Activated CD4-positive, alpha-beta T cell treated with anti-CD3 and anti-CD28 coated beads for 36 hours (primary cell): ENCODE measurements at regions of chr10 and their contacts with region 1.

Region 1: DNA sequence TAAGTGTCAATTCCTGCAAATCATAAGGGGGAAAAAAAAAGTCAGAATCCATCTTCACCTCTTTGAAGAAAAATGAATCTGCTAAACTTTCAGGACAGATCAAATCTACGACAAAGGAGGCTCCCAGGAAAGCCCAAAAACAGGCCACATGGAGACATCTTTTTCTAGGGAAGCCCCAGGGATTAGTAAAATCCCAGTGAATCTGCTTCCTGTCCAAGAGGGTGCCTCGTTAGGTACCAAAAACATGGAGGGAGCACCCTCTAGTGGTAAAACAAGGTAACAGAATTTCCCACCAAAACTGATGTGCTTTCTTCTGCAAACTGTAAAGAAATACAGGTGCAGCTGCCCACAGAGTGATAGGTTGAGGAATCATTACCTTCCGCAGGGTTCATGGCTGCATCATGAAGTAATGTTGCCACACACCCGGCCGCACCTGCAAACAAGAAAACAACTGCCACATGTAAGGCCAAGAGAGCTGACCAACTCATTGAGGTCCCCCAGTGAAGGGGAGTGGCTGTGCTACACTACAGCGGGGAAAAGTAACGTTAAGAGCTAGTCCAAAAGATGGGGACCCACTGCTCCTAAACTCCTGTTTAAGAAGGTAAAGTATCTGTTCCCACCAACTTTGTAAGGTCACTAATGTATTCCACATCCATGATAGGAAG is 7.9 kb downstream of the SLC25A28 start:
- DNase-seq: peak; percentile 28
- ATAC-seq: peak; percentile 31
- H3K4me3 Mint-ChIP-seq: no peak overlapping the region
- H3K27ac Mint-ChIP-seq: peak overlapping the region; percentile 30
- H3K4me1 Mint-ChIP-seq: peaks cover 37% of the 10 kb centered on the region
- H3K27me3 Mint-ChIP-seq: no peaks in the 10 kb centered on the region

Region 2: GRCh38 chr10:99395750-99396445 is 216.4 kb before region 1 on chr10:
- CTCF ChIA-PET with region 1: interaction called, 6 read pairs
- POLR2A ChIA-PET with region 1: no interaction called
- intact Hi-C with region 1: loop called (anchors 1 to 2 kb)
- DNase-seq: no peak
- ATAC-seq: no peak
- H3K4me3 Mint-ChIP-seq: no peak overlapping the region
- H3K27ac Mint-ChIP-seq: no peak overlapping the region
- H3K4me1 Mint-ChIP-seq: peaks cover 8% of the 10 kb centered on the region
- H3K27me3 Mint-ChIP-seq: no peaks in the 10 kb centered on the region

Region 3: GRCh38 chr10:99560277-99561126 is 51.8 kb before region 1 on chr10:
- CTCF ChIA-PET with region 1: interaction called, 37 read pairs
- POLR2A ChIA-PET with region 1: no interaction called
- intact Hi-C with region 1: loop called (anchors 1 kb)
- DNase-seq: peak; percentile 66
- ATAC-seq: no peak
- H3K4me3 Mint-ChIP-seq: no peak overlapping the region
- H3K27ac Mint-ChIP-seq: no peak overlapping the region
- H3K4me1 Mint-ChIP-seq: peaks cover 8% of the 10 kb centered on the region
- H3K27me3 Mint-ChIP-seq: peaks cover 20% of the 10 kb centered on the region

Region 4: DNA sequence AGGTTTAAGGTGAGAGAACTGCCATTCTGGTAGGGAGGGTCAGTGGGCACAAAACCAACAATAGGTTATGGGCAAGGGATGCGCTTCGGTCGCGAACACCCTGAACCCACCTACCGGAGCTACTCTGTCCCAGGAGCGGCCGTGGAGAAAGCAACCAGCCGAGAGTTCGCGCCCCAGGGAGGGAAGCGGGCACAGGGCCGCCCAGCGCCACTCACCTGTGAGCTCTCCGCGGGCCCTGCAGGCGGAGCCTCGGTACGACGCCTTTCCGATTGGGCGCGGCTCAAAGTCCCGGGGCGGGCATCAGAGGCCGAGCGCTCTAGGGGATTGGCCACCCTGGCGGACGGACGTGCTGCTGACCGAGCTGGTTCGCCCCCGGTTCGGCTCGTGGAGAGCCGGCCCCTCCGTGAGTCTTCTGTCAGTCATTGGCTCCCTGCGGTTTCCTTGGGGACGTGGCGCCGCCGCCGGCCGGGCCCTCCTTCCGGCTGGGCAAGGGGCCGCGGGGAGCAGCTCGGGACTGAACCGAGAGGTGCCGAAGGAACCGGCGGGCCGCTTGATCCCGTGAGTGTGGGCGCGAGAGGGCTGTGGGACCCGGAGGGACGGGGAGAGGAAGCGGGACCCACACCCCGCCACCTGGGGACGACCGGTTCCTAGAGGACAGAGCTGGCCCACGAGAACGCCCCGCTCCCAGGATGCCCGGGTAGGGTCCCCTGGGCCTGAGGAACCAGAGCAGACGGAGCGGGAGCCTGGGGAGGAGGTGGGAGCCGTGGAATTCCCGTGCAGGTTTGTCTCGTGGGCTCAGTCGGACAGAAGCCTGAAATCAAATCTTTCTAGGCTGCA is 47.0 kb after region 1 on chr10 and contains the start of gene ENTPD7:
- CTCF ChIA-PET with region 1: interaction called, 10 read pairs
- POLR2A ChIA-PET with region 1: interaction called, 7 read pairs
- intact Hi-C with region 1: no loop called
- DNase-seq: peak; percentile 96
- ATAC-seq: peak; percentile 99
- H3K4me3 Mint-ChIP-seq: peak within 1 kb of the TSS; percentile 84
- H3K27ac Mint-ChIP-seq: peak within 1 kb of the TSS; percentile 85
- H3K4me1 Mint-ChIP-seq: peaks cover 22% of the 10 kb centered on the region
- H3K27me3 Mint-ChIP-seq: peaks cover 12% of the 10 kb centered on the region
- total RNA-seq, gene ENTPD7: 2.5 to 2.7 TPM